ENCODE measurements at regions of chr15 and their contacts with region 1.

Region 1: DNA sequence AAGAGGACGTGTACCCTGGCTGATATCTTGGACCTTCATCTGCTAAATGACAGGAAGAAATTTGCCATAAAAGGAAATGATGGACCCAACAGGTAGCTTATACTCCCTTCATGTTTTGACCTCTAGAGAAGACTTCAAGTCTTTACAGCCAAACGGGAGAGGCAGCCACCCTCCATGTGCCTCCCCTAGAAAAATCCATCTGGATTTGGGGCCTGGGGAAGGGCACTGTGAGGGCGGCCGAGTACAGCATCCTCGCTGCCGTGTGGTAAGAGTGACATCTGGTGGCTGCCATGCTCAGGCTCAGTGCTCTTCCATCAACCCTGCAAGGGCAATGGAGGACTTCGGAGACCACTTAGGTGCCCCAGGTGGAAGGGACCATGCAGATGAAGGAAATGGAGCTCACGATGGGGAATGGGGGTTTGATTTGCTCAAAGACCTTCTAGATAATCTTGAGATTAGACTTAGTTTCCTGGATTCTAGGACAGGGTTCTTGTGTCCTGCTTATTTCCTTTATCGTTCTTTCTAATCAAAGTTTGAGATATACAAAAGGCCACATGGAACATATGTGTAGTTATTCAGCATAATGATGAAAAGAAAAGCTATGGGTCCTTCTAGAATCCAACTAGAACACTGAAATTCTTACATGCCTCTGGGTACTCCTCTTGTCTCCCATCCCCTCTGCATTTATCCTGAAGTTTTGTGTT is 44.4 kb downstream of the AQP9 start:
- DNase-seq: peak; percentile 14 to 41
- ATAC-seq: peak; percentile 63 to 93 (median 88)
- H3K4me3 ChIP-seq: no peak overlapping the region
- H3K27ac ChIP-seq: no peak overlapping the region
- H3K4me1 ChIP-seq: no peaks in the 10 kb centered on the region
- H3K27me3 ChIP-seq: peaks cover 0 to 13% (median 0%) of the 10 kb centered on the region in 7 donors
- CTCF ChIP-seq: peak; percentile 49 to 87 (median 78)

Region 2: DNA sequence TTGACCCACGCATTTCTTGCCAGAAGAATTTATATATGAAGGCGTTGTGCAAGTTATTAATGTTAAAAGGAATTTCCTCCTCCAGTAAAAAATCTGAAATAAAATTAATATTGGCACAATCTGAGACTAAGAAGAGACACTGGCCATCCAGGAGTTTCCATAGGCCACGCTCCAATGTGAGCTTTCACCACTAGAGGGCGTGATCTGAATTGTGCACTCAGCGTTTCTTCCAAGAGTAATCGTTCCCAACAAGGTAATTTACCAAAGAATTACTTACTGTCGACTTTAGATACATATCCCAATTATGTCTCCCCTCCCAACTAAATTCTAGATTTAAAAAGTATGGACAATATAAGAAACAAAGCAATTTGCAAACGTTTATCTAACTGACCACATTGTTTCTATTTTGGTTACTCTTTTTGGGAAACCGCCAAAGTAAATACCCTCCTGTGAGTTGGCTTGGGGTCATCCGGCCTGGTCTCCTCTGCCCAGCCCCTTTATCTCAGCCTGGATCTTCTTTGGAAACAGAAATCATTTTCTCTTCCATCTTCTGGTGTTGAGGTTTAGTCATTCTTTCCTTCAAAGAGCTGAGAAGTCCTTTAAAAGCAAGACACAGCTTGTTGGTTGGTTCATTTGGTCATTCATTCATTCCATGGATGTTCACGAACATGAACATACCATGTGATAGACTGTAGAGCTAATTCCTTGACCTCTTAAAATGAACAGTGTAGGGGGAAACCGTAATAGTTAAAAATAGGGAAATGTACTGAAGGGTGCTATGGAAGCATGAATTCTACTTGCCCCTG is 449.9 kb before region 1 on chr15:
- intact Hi-C with region 1: loop called in 3 of 10 experiments (anchors 5 to 10 kb)
- DNase-seq: peak in 1 of 2 donors; percentile 45
- ATAC-seq: peak in 6 of 8 donors; percentile 46 to 74 (median 64)
- H3K4me3 ChIP-seq: no peak overlapping the region
- H3K27ac ChIP-seq: no peak overlapping the region
- H3K4me1 ChIP-seq: peaks cover 0 to 19% (median 6%) of the 10 kb centered on the region in 9 donors
- H3K27me3 ChIP-seq: no peaks in the 10 kb centered on the region
- CTCF ChIP-seq: peak; percentile 68 to 94 (median 87)

Region 3: DNA sequence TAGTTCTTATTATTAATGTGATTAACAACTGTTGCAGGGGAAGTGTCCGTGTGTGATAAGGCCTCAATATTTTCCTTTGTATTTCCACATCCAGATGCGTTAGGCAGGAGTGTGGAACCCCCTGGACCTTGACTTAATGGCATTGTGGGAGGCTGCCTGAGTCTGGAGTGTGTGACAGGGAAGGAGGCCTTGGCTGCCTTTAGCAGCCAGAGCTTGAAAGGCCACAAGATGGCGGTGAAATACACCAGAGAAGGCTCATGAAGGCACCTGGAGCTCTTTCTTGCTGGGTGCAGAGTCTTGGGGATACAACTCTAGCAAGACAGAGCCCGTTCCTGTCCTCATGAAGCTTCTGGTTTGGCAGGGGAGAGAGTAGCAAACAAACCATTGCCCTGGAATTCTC is 439.2 kb before region 1 on chr15:
- intact Hi-C with region 1: loop called in 5 of 10 experiments (anchors 5 to 10 kb)
- DNase-seq: no peak
- ATAC-seq: peak in 1 of 8 donors; percentile 24
- H3K4me3 ChIP-seq: no peak overlapping the region
- H3K27ac ChIP-seq: no peak overlapping the region
- H3K4me1 ChIP-seq: no peaks in the 10 kb centered on the region
- H3K27me3 ChIP-seq: no peaks in the 10 kb centered on the region
- CTCF ChIP-seq: peak in 4 of 9 donors; percentile 11 to 36 (median 16)

Region 4: GRCh38 chr15:57751177-57751800 is 431.3 kb before region 1 on chr15:
- intact Hi-C with region 1: loop called in 3 of 10 experiments (anchors 10 kb)
- DNase-seq: no peak
- ATAC-seq: peak in 6 of 8 donors; percentile 35 to 61 (median 51)
- H3K4me3 ChIP-seq: no peak overlapping the region
- H3K27ac ChIP-seq: no peak overlapping the region
- H3K4me1 ChIP-seq: peaks cover 0 to 13% (median 0%) of the 10 kb centered on the region in 9 donors
- H3K27me3 ChIP-seq: no peaks in the 10 kb centered on the region
- CTCF ChIP-seq: peak in 8 of 9 donors; percentile 48 to 77 (median 66)

Region 5: GRCh38 chr15:57866149-57866736 is 316.4 kb before region 1 on chr15:
- intact Hi-C with region 1: loop called in 4 of 10 experiments (anchors 10 kb)
- DNase-seq: peak; percentile 46 to 62
- ATAC-seq: peak in 3 of 8 donors; percentile 52 to 55 (median 54)
- H3K4me3 ChIP-seq: no peak overlapping the region
- H3K27ac ChIP-seq: no peak overlapping the region
- H3K4me1 ChIP-seq: no peaks in the 10 kb centered on the region
- H3K27me3 ChIP-seq: peaks cover 0 to 21% (median 3%) of the 10 kb centered on the region in 7 donors
- CTCF ChIP-seq: peak; percentile 67 to 84 (median 79)

Region 6: GRCh38 chr15:58077427-58077826 is 105.2 kb before region 1 on chr15:
- intact Hi-C with region 1: loop called in 4 of 10 experiments (anchors 5 to 10 kb)
- DNase-seq: no peak
- ATAC-seq: peak in 1 of 8 donors; percentile 34
- H3K4me3 ChIP-seq: no peak overlapping the region
- H3K27ac ChIP-seq: no peak overlapping the region
- H3K4me1 ChIP-seq: no peaks in the 10 kb centered on the region
- H3K27me3 ChIP-seq: peaks cover 0 to 26% (median 4%) of the 10 kb centered on the region in 7 donors
- CTCF ChIP-seq: peak in 4 of 9 donors; percentile 11 to 21 (median 16)

Region 7: GRCh38 chr15:58115692-58116091 is 66.9 kb before region 1 on chr15:
- intact Hi-C with region 1: loop called in 6 of 10 experiments (anchors 2 to 10 kb)
- DNase-seq: no peak
- ATAC-seq: peak in 1 of 8 donors; percentile 37
- H3K4me3 ChIP-seq: no peak overlapping the region
- H3K27ac ChIP-seq: no peak overlapping the region
- H3K4me1 ChIP-seq: no peaks in the 10 kb centered on the region
- H3K27me3 ChIP-seq: peaks cover 0 to 14% (median 9%) of the 10 kb centered on the region in 7 donors
- CTCF ChIP-seq: peak in 7 of 9 donors; percentile 13 to 40 (median 35)